CD4-positive, alpha-beta T cell (primary cell): ENCODE measurements at regions of chr10 and their contacts with region 1.

Region 1: GRCh38 chr10:43574001-43574892 is at the start of gene ZNF239:
- DNase-seq: peak; percentile 62 to 93 (median 78)
- ATAC-seq: peak; percentile 90
- H3K4me3 ChIP-seq: peak within 1 kb of the TSS; percentile 55
- H3K4me3 Mint-ChIP-seq: peak within 1 kb of the TSS; percentile 92
- H3K27ac ChIP-seq: peak within 1 kb of the TSS; percentile 49 to 50
- H3K27ac Mint-ChIP-seq: peak within 1 kb of the TSS; percentile 87
- H3K4me1 ChIP-seq: peaks cover 31% of the 10 kb centered on the region
- H3K4me1 Mint-ChIP-seq: peaks cover 58% of the 10 kb centered on the region
- H3K27me3 ChIP-seq: no peaks in the 10 kb centered on the region
- H3K27me3 Mint-ChIP-seq: no peaks in the 10 kb centered on the region
- CTCF ChIP-seq: no peak
- total RNA-seq, gene ZNF239: 0.59 to 0.63 TPM

Region 2: DNA sequence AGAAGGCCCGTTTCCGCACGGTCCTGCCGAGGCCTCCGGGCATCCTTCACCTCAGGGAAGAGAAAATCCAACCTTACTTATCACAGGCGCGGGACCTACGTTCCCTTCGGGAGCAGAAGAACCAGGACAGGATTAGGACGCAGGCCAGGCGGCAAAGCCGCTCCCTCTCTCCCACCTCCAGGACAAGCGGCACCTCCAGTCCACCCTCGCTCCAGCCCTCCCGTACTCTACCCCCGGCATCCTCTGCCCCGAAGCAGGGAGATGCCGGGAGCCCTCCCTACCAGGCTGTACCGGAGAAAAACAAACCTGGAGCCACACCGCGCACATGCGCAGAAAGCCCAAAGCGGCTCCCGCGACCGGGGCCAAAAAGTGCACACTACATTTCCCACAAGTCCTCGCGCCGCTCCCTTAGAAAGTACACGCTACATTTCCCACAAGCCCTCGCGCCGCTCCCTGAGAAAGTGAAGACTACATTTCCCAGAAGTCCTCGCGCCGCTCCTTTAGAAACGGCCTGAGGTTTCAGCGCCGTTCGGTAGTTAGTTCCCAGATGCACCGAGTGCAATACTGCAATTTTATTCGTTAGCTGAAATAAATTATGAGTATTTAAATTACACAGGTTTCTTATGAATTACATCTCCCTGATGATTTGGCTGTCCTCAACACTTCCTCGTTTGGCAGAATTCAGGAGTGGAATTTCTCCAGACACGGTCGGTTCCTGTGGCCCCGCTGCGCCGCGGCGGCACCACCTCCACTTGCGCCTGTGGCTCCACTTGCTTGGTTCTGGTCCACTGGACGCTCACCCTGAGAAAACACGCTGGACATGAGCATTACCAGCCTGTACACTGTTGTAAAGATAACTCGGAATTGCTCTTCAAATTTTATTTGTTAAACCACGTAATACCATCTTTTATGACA is 1021.5 kb before region 1 on chr10:
- CTCF ChIA-PET with region 1: no interaction called
- POLR2A ChIA-PET with region 1: no interaction called
- intact Hi-C with region 1: loop called in 1 of 2 experiments (anchors 5 kb)
- DNase-seq: peak; percentile 87 to 97 (median 94)
- ATAC-seq: peak; percentile 95
- H3K4me3 ChIP-seq: peak overlapping the region; percentile 85
- H3K4me3 Mint-ChIP-seq: peak overlapping the region; percentile 94
- H3K27ac ChIP-seq: peak overlapping the region; percentile 58 to 75
- H3K27ac Mint-ChIP-seq: peak overlapping the region; percentile 87
- H3K4me1 ChIP-seq: peaks cover 23% of the 10 kb centered on the region
- H3K4me1 Mint-ChIP-seq: peaks cover 46% of the 10 kb centered on the region
- H3K27me3 ChIP-seq: no peaks in the 10 kb centered on the region
- H3K27me3 Mint-ChIP-seq: no peaks in the 10 kb centered on the region
- CTCF ChIP-seq: no peak

Region 3: DNA sequence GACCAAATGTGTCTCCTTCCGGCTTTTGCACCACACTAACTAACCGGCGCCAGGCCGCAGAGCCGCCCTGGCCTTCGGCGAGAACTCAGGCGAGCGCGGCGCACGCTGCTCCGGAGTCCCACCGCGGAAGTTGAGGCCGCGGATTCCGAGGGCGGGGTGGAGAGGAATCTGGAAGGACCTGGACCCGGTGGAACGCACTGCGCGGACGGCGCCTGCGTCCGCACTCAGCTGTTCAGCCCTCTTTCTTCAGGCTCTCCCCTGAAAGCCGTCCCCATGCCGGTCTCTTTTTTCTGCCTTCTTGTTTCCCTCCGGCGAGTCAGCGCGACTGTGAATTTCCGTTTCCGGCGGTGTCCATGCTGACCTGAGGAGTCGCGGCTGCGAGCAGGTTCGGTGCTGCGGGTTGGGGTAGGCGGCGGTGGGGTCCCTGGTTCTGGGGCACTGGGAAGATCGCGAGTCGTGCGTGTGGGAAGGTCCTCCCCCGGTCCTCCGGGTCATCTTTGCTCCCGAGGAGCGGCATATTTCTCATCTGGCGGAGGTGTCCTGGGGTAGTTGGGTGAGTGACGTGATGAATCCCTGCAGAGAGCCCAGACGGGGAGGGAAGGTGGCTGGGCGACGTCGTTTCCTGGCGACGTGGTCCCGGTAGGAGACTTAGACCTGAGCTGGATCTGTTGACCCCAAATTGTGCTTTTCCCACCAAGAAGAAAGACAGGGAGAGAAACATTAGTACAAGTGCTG is 791.6 kb before region 1 on chr10 and contains the start of gene BMS1:
- CTCF ChIA-PET with region 1: no interaction called
- POLR2A ChIA-PET with region 1: no interaction called
- intact Hi-C with region 1: loop called in 1 of 2 experiments (anchors 10 kb)
- DNase-seq: peak; percentile 79 to 93 (median 85)
- ATAC-seq: peak; percentile 85
- H3K4me3 ChIP-seq: peak within 1 kb of the TSS; percentile 65
- H3K4me3 Mint-ChIP-seq: peak within 1 kb of the TSS; percentile 99
- H3K27ac ChIP-seq: peak within 1 kb of the TSS; percentile 65
- H3K27ac Mint-ChIP-seq: peak within 1 kb of the TSS; percentile 88
- H3K4me1 ChIP-seq: peaks cover 16% of the 10 kb centered on the region
- H3K4me1 Mint-ChIP-seq: peaks cover 34% of the 10 kb centered on the region
- H3K27me3 ChIP-seq: no peaks in the 10 kb centered on the region
- H3K27me3 Mint-ChIP-seq: peaks cover 3% of the 10 kb centered on the region
- CTCF ChIP-seq: no peak
- total RNA-seq, gene BMS1: 13.8 to 15.3 TPM

Region 4: GRCh38 chr10:43502931-43503330 is 71.3 kb before region 1 on chr10:
- CTCF ChIA-PET with region 1: no interaction called
- POLR2A ChIA-PET with region 1: no interaction called
- intact Hi-C with region 1: no loop called
- DNase-seq: no peak
- ATAC-seq: no peak
- H3K4me3 ChIP-seq: no peak overlapping the region
- H3K4me3 Mint-ChIP-seq: no peak overlapping the region
- H3K27ac ChIP-seq: no peak overlapping the region
- H3K27ac Mint-ChIP-seq: no peak overlapping the region
- H3K4me1 ChIP-seq: no peaks in the 10 kb centered on the region
- H3K4me1 Mint-ChIP-seq: no peaks in the 10 kb centered on the region
- H3K27me3 ChIP-seq: no peaks in the 10 kb centered on the region
- H3K27me3 Mint-ChIP-seq: no peaks in the 10 kb centered on the region
- CTCF ChIP-seq: no peak

Region 5: DNA sequence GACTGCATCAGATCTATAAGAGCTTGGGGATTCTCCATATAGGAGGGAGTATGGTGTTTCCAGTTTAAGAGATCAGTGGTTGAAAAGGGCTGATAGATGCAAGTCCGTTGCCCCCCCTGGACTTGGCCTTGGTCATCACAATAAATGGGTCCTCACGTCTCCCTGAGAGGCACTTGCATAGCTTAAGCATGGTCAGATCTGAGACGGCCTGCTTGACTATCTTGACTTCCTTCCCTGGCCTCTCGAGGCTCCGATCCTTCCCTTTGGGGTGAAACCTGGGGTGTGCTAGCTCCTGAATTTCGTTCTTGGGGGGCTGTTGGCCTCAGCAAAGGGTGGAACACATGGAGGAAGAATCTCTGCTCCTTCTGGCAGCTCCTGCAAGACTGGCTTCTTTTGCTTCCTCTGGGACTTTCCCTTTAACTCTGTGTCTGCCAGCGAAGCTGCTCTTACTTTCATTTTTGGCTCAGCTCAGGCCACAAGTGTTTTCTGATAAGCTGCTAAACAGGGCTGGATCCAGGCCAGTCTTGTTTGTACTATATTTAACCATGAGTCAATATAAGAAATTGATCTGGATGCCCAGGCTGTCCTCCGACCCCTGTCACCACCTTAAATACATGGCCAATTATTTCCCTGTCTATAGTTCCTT is 20.8 kb after region 1 on chr10:
- CTCF ChIA-PET with region 1: interaction called, 3 read pairs
- POLR2A ChIA-PET with region 1: interaction called, 21 read pairs
- intact Hi-C with region 1: no loop called
- DNase-seq: peak in 4 of 14 experiments; percentile 24 to 70 (median 68)
- ATAC-seq: peak; percentile 81
- H3K4me3 ChIP-seq: peak overlapping the region; percentile 53
- H3K4me3 Mint-ChIP-seq: peak overlapping the region; percentile 83
- H3K27ac ChIP-seq: peak overlapping the region in 1 of 2 donors; percentile 52
- H3K27ac Mint-ChIP-seq: peak overlapping the region; percentile 61
- H3K4me1 ChIP-seq: peaks cover 22% of the 10 kb centered on the region
- H3K4me1 Mint-ChIP-seq: peaks cover 25% of the 10 kb centered on the region
- H3K27me3 ChIP-seq: no peaks in the 10 kb centered on the region
- H3K27me3 Mint-ChIP-seq: no peaks in the 10 kb centered on the region
- CTCF ChIP-seq: no peak

Region 6: GRCh38 chr10:43648398-43649184 is 74.3 kb after region 1 on chr10 and contains the start of gene ZNF32:
- CTCF ChIA-PET with region 1: no interaction called
- POLR2A ChIA-PET with region 1: interaction called, 23 read pairs
- intact Hi-C with region 1: loop called in 1 of 2 experiments (anchors 2 kb)
- DNase-seq: peak; percentile 64 to 91 (median 76)
- ATAC-seq: peak; percentile 98
- H3K4me3 ChIP-seq: peak within 1 kb of the TSS; percentile 73
- H3K4me3 Mint-ChIP-seq: peak within 1 kb of the TSS; percentile 96
- H3K27ac ChIP-seq: peak within 1 kb of the TSS in 1 of 2 donors; percentile 71
- H3K27ac Mint-ChIP-seq: peak within 1 kb of the TSS; percentile 96
- H3K4me1 ChIP-seq: peaks cover 17% of the 10 kb centered on the region
- H3K4me1 Mint-ChIP-seq: peaks cover 27% of the 10 kb centered on the region
- H3K27me3 ChIP-seq: no peaks in the 10 kb centered on the region
- H3K27me3 Mint-ChIP-seq: peaks cover 3% of the 10 kb centered on the region
- CTCF ChIP-seq: no peak
- total RNA-seq, gene ZNF32: 18.7 to 19.5 TPM